BJ (cell line): ENCODE measurements at regions of chr6 and their contacts with region 1.

Region 1: DNA sequence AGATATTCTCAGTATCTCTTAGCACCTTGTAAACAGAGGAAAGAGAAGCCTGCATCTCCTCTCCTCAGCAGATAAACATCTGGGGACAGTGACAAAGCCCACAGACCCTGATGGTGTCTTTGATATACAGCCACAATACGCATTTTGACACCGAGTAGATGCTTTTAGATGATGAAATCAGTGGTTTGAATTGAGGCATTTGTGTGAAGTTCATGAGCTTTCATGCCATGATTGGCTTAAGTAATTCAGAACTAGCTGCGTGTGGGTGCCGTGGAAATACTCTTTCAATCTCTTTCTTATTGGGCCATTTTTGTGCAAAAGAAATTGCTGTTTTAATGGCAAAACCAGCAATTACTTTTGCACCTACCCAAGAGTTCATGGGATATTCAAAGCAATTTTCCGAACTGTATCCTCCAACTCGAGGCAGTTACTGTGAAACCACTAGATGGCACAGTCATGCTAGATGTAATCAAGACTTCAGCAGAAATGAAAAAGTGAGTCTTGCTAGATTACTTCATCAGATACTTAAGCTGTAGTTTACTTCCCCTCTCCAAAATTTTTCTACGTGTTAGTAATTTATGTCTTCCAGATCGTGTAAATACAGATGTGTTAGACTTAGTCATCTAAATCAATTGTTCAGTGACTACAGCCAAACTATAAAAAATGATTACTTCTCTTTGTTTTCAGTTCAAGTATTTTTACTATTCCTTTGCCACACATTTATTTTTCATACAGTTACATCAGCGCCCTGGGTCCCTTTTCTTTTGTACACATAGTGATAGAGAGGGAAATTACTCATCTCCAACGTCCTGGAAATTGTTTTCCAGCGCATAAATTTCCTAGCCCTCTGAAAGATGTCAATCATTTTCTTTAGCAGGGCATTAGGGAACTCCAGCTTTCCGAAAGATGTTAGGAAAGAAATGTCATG is 49.4 kb downstream of the IYD start:
- DNase-seq: peak; percentile 72
- H3K4me3 ChIP-seq: peak overlapping the region; percentile 33
- H3K27me3 ChIP-seq: peaks cover 8% of the 10 kb centered on the region
- CTCF ChIP-seq: peak; percentile 80

Region 2: GRCh38 chr6:150320442-150320841 is 97.7 kb before region 1 on chr6:
- CTCF ChIA-PET with region 1: no interaction called
- POLR2A ChIA-PET with region 1: no interaction called
- DNase-seq: no peak
- H3K4me3 ChIP-seq: no peak overlapping the region
- H3K27me3 ChIP-seq: peaks cover 3% of the 10 kb centered on the region; the same call in 1 of the 2 replicates
- CTCF ChIP-seq: no peak

Region 3: GRCh38 chr6:150403458-150404246 is 14.5 kb before region 1 on chr6:
- CTCF ChIA-PET with region 1: interaction called, 35 read pairs
- POLR2A ChIA-PET with region 1: no interaction called
- DNase-seq: peak; percentile 43
- H3K4me3 ChIP-seq: no peak overlapping the region
- H3K27me3 ChIP-seq: peaks cover 6% of the 10 kb centered on the region; the same call in 1 of the 2 replicates
- CTCF ChIP-seq: no peak